ENCODE measurements at regions of chr6 and their contacts with region 1.

Region 1: DNA sequence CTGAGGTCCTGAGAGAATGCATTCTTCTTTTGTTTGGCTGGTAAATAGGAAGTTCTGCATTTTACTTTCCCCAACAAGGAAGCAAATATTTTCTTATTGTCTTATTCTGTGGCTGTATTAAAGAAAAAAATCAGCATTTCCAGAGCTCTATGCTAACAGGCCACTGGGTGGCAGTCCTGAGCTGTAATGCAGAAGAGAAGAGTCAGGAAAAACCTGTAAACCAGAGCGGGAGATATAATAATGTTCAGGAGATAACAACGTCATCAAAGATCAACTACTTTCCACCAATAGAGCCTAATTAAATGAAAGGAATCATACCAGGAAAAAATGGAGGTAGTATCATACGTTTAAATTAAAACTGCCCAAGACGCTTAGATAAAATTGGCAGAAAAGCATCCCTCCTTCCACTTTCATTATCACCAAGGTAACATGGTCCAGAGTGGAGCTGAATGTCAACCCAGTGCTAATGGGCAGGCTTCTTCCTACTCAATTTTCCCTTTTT is 55.6 kb upstream of the CARMIL1 start:
- DNase-seq: peak; percentile 81
- H3K4me3 Mint-ChIP-seq: peak overlapping the region; percentile 13
- H3K27ac Mint-ChIP-seq: no peak overlapping the region
- H3K4me1 Mint-ChIP-seq: peaks cover 32% of the 10 kb centered on the region
- H3K27me3 Mint-ChIP-seq: no peaks in the 10 kb centered on the region
- CTCF ChIP-seq: peak; percentile 87

Region 2: DNA sequence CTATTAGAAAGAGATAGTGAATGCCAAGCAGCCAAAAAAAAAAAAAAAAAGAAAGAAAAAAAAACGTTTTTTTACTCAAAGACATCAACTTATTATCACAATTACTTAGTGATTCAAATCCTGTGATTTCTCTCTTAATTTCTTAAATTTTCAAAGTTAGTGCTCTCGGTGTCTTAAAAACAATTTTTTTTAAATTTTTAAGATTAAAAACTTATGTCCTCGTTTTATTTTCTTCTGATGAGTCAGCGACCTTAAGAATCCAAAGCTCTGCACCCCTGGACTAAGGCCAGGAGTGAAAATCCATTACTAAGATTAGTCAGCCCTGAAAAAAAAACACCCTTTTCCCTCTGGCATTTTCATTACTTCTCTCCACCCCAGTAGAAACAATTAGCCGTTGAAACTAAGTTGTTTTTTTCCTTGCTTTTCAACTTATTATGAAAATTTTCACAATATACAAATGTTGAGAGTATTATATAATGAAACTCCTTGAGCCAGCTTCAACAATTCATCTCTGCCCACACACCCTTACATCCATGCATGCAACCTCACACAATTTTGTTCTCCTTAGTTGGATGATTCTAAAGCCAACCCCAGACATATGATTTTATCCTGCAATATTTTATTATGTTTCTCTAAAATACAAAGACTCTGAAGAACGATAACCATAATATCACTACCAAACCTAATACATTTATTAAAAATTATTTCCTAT is 29.9 kb before region 1 on chr6:
- CTCF ChIA-PET with region 1: interaction called, 9 read pairs
- POLR2A ChIA-PET with region 1: interaction called, 27 read pairs
- intact Hi-C with region 1: no loop called
- DNase-seq: peak; percentile 97
- H3K4me3 Mint-ChIP-seq: peak overlapping the region; percentile 56
- H3K27ac Mint-ChIP-seq: peak overlapping the region; percentile 66
- H3K4me1 Mint-ChIP-seq: peaks cover 25% of the 10 kb centered on the region
- H3K27me3 Mint-ChIP-seq: no peaks in the 10 kb centered on the region
- CTCF ChIP-seq: no peak

Region 3: GRCh38 chr6:25263657-25264056 is 40.1 kb after region 1 on chr6:
- CTCF ChIA-PET with region 1: interaction called, 20 read pairs
- POLR2A ChIA-PET with region 1: no interaction called
- intact Hi-C with region 1: loop called (anchors 1 kb)
- DNase-seq: peak; percentile 30
- H3K4me3 Mint-ChIP-seq: no peak overlapping the region
- H3K27ac Mint-ChIP-seq: no peak overlapping the region
- H3K4me1 Mint-ChIP-seq: peaks cover 8% of the 10 kb centered on the region
- H3K27me3 Mint-ChIP-seq: no peaks in the 10 kb centered on the region
- CTCF ChIP-seq: no peak

Region 4: DNA sequence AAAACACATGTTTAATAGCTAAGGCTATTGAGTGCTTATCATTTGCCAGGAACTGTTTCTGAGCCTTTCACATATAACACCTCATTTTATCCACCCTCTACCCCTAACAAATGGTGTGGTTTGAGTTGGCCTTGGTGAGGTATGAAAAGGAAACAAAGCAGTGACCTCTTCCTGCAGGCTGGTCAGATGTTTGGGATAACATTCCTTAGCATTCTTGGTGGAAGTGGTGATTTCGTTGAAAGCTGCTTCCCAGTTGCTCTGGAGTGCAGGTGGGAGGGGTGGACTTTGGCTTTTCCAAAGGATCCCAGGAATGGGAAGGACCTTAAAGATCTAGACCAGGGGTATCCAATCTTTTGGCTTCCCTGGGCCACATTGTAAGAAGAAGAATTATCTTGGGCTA is 96.9 kb after region 1 on chr6:
- CTCF ChIA-PET with region 1: no interaction called
- POLR2A ChIA-PET with region 1: no interaction called
- intact Hi-C with region 1: no loop called
- DNase-seq: no peak
- H3K4me3 Mint-ChIP-seq: no peak overlapping the region
- H3K27ac Mint-ChIP-seq: no peak overlapping the region
- H3K4me1 Mint-ChIP-seq: peaks cover 5% of the 10 kb centered on the region
- H3K27me3 Mint-ChIP-seq: no peaks in the 10 kb centered on the region
- CTCF ChIP-seq: no peak

Region 5: DNA sequence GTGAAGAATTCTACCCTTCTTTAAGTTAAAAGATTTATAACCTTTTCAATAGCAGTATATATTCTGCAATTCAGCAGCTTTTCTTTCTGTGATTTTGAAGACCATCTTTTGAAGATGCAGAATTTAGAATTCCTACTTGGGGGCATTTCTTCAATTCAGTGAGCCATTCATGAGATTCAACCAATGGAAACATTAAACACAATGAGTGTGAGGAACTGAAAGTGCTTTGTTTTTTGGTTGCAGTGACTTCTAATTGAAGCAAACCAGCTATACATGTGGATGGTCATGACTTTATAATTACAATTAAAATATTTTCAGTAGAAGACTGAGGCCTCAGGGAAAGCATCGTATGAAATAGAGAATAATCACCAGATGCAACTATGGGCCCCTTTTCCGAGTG is 163.9 kb after region 1 on chr6:
- CTCF ChIA-PET with region 1: no interaction called
- POLR2A ChIA-PET with region 1: no interaction called
- intact Hi-C with region 1: no loop called
- DNase-seq: no peak
- H3K4me3 Mint-ChIP-seq: no peak overlapping the region
- H3K27ac Mint-ChIP-seq: no peak overlapping the region
- H3K4me1 Mint-ChIP-seq: peaks cover 14% of the 10 kb centered on the region
- H3K27me3 Mint-ChIP-seq: no peaks in the 10 kb centered on the region
- CTCF ChIP-seq: no peak

Region 6: GRCh38 chr6:25404693-25405169 is 181.2 kb after region 1 on chr6:
- CTCF ChIA-PET with region 1: no interaction called
- POLR2A ChIA-PET with region 1: no interaction called
- intact Hi-C with region 1: no loop called
- DNase-seq: peak; percentile 9
- H3K4me3 Mint-ChIP-seq: no peak overlapping the region
- H3K27ac Mint-ChIP-seq: no peak overlapping the region
- H3K4me1 Mint-ChIP-seq: no peaks in the 10 kb centered on the region
- H3K27me3 Mint-ChIP-seq: no peaks in the 10 kb centered on the region
- CTCF ChIP-seq: no peak

Region 7: DNA sequence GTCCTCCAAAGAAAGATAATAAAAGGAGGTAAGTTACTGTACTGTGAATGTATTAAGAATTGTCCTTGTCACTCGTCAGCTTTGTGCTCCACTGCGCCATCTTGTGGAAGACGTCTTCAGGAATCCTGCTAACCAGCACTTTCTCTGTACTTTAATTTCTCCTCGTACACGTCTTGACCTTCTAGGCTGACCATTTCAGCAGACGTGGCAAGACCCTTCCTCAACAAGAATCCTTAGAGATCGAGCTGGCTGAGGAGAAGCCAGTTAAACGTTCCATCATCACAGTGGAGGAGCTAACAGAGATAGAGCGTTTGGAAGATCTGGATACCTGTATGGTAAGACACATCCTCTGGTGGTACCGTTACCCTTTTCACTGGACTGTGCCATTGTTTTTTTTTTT is 333.0 kb after region 1 on chr6:
- CTCF ChIA-PET with region 1: interaction called, 6 read pairs
- POLR2A ChIA-PET with region 1: interaction called, 6 read pairs
- intact Hi-C with region 1: loop called (anchors 1 kb)
- DNase-seq: peak; percentile 83
- H3K4me3 Mint-ChIP-seq: no peak overlapping the region
- H3K27ac Mint-ChIP-seq: no peak overlapping the region
- H3K4me1 Mint-ChIP-seq: peaks cover 5% of the 10 kb centered on the region
- H3K27me3 Mint-ChIP-seq: no peaks in the 10 kb centered on the region
- CTCF ChIP-seq: peak; percentile 69

Region 8: DNA sequence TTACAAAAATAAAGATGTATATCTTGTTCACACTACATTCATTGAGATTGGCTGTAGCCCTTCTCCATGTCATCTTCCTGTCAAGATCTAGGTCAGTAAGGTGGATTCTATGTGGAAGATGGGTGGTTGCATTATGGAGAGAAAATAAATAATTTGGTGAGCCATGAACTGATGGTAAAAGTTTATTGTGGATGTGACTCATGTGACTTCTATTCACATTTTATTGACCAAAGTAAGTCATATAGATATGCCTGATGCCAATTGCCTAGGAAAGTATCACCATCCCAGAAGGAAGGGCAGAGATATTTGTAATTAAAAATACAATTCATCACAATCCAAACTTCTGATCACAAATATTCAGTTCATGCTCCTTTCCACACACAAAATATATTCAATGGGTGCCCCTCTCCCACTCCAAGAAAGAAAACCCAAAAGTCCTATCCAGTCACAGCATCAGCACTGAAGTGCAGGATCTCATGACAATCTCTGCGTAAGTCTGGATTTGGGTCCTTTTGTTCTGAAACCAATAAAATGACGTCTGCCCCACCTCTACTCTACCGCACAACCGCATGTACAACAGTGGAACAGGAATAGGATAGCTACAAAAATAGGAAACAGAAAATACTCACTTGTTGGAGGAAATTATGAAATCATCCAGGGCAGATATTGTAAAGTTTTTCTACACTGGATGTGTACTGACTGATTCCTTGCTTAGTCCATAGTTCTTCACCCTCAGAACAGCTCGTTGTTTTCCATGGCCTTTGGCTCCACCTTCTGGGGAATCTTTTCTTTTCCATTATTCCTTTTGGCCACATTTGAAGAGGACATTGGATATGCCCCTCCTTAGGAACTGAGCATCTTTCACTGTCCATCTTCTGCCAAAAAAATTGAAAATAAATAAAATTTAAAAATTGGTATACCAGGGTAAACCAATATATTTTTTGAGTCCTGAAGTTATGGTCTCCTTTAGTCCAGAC is 666.6 kb after region 1 on chr6:
- CTCF ChIA-PET with region 1: no interaction called
- POLR2A ChIA-PET with region 1: no interaction called
- intact Hi-C with region 1: loop called (anchors 5 kb)
- DNase-seq: peak; percentile 75
- H3K4me3 Mint-ChIP-seq: no peak overlapping the region
- H3K27ac Mint-ChIP-seq: no peak overlapping the region
- H3K4me1 Mint-ChIP-seq: no peaks in the 10 kb centered on the region
- H3K27me3 Mint-ChIP-seq: no peaks in the 10 kb centered on the region
- CTCF ChIP-seq: peak; percentile 60

Measured in MCF 10A (cell line).